Endothelial cell of umbilical vein (primary cell): ENCODE measurements at regions of chr5 and their contacts with region 1.

Region 1: DNA sequence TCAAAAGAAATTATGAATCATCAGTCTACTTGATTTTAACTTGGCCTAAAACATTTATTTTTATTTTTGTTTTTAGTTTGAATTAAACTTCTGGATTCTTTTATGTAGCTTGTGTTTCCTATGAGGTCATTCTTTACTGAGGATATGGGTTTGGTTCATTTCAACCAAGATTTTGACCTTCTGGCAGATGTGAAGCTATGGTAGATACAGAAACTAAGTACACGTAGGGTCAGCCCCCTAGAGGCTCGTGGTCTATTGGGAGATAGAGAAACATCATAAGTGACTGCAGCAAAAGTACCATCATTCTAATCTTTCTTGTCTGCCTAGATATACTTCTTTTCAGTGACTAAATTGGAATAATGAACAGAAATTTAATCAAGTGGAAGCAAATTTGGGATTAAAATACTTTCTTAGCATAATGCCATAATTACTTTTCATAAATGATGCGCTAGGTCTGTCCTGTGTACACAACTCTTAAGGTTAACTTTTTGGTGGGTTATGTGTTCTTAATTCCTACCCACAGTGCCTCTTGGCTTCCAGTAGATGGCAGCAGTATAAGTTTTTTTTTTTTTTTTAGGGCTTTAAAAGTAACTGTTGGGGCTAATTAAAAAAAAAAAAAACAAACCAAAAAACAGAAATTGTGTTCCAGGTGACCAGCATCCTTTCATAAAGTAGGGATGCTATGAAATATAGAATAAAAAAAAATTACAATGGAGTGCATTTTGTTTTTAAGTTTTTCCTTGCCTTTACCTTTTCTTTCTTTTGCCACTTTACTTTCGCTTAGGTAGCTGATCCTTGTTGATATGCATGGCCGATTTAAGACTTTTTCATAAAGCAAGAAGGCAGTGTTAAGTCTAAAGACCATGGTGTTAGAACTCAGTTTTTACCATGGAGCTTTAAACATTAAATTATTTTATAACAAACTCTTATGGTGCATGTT is 49.9 kb downstream of the LRRTM2 start:
- DNase-seq: peak; percentile 58
- H3K4me3 ChIP-seq: no peak overlapping the region
- H3K27ac ChIP-seq: peak overlapping the region; percentile 45
- H3K4me1 ChIP-seq: peaks cover 2% of the 10 kb centered on the region
- H3K27me3 ChIP-seq: no peaks in the 10 kb centered on the region
- CTCF ChIP-seq: peak; percentile 29 to 30
- POLR2A ChIP-seq: no peak

Region 2: GRCh38 chr5:138844812-138845513 is 19.8 kb after region 1 on chr5:
- CTCF ChIA-PET with region 1: interaction called, 12 read pairs
- POLR2A ChIA-PET with region 1: no interaction called
- dilution Hi-C with region 1: no loop called
- intact Hi-C with region 1: no loop called
- DNase-seq: peak; percentile 74
- H3K4me3 ChIP-seq: no peak overlapping the region
- H3K27ac ChIP-seq: peak overlapping the region; percentile 62
- H3K4me1 ChIP-seq: peaks cover 33% of the 10 kb centered on the region
- H3K27me3 ChIP-seq: no peaks in the 10 kb centered on the region
- CTCF ChIP-seq: no peak
- POLR2A ChIP-seq: no peak

Region 3: GRCh38 chr5:138872841-138873465 is 47.8 kb after region 1 on chr5:
- CTCF ChIA-PET with region 1: interaction called, 9 read pairs
- POLR2A ChIA-PET with region 1: no interaction called
- dilution Hi-C with region 1: no loop called
- intact Hi-C with region 1: loop called (anchors 1 kb)
- DNase-seq: peak; percentile 43
- H3K4me3 ChIP-seq: no peak overlapping the region
- H3K27ac ChIP-seq: no peak overlapping the region
- H3K4me1 ChIP-seq: peaks cover 19% of the 10 kb centered on the region
- H3K27me3 ChIP-seq: no peaks in the 10 kb centered on the region
- CTCF ChIP-seq: no peak
- POLR2A ChIP-seq: no peak

Region 4: DNA sequence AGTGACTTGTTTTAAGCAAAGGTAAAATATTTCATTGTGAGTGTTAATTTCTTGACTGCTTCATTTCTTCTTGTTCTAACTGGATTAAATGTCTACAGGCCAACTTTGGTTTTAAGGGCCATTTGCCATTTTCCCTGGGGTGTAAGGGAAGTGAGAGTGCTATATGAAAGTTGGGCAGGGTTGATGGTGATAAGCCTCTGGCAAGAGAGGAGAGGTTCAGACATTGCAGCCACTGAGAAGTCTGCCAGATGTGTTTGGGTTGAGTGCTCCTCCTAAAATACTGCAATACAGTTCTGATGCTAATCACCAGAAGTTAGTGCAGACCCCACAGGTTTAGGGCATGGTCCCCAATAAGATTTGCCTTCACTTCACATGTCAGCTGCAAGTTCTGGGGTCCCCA is 64.8 kb after region 1 on chr5:
- CTCF ChIA-PET with region 1: no interaction called
- POLR2A ChIA-PET with region 1: no interaction called
- dilution Hi-C with region 1: no loop called
- intact Hi-C with region 1: no loop called
- DNase-seq: no peak
- H3K4me3 ChIP-seq: no peak overlapping the region
- H3K27ac ChIP-seq: no peak overlapping the region
- H3K4me1 ChIP-seq: no peaks in the 10 kb centered on the region
- H3K27me3 ChIP-seq: no peaks in the 10 kb centered on the region
- CTCF ChIP-seq: no peak
- POLR2A ChIP-seq: no peak

Region 5: GRCh38 chr5:138900281-138900965 is 75.2 kb after region 1 on chr5:
- CTCF ChIA-PET with region 1: interaction called, 4 read pairs
- POLR2A ChIA-PET with region 1: no interaction called
- dilution Hi-C with region 1: no loop called
- intact Hi-C with region 1: loop called (anchors 1 kb)
- DNase-seq: peak; percentile 89
- H3K4me3 ChIP-seq: peak overlapping the region in 1 of 3 experiments; percentile 14
- H3K27ac ChIP-seq: peak overlapping the region; percentile 79
- H3K4me1 ChIP-seq: peaks cover 50% of the 10 kb centered on the region
- H3K27me3 ChIP-seq: no peaks in the 10 kb centered on the region
- CTCF ChIP-seq: no peak
- POLR2A ChIP-seq: no peak

Region 6: GRCh38 chr5:138911441-138911840 is 86.2 kb after region 1 on chr5:
- CTCF ChIA-PET with region 1: interaction called, 16 read pairs
- POLR2A ChIA-PET with region 1: no interaction called
- dilution Hi-C with region 1: no loop called
- intact Hi-C with region 1: no loop called
- DNase-seq: no peak
- H3K4me3 ChIP-seq: no peak overlapping the region
- H3K27ac ChIP-seq: no peak overlapping the region
- H3K4me1 ChIP-seq: no peaks in the 10 kb centered on the region
- H3K27me3 ChIP-seq: no peaks in the 10 kb centered on the region
- CTCF ChIP-seq: no peak
- POLR2A ChIP-seq: no peak

Region 7: GRCh38 chr5:139004374-139005307 is 179.4 kb after region 1 on chr5:
- CTCF ChIA-PET with region 1: no interaction called
- POLR2A ChIA-PET with region 1: no interaction called
- dilution Hi-C with region 1: no loop called
- intact Hi-C with region 1: no loop called
- DNase-seq: no peak
- H3K4me3 ChIP-seq: no peak overlapping the region
- H3K27ac ChIP-seq: no peak overlapping the region
- H3K4me1 ChIP-seq: no peaks in the 10 kb centered on the region
- H3K27me3 ChIP-seq: no peaks in the 10 kb centered on the region
- CTCF ChIP-seq: no peak
- POLR2A ChIP-seq: no peak

Region 8: DNA sequence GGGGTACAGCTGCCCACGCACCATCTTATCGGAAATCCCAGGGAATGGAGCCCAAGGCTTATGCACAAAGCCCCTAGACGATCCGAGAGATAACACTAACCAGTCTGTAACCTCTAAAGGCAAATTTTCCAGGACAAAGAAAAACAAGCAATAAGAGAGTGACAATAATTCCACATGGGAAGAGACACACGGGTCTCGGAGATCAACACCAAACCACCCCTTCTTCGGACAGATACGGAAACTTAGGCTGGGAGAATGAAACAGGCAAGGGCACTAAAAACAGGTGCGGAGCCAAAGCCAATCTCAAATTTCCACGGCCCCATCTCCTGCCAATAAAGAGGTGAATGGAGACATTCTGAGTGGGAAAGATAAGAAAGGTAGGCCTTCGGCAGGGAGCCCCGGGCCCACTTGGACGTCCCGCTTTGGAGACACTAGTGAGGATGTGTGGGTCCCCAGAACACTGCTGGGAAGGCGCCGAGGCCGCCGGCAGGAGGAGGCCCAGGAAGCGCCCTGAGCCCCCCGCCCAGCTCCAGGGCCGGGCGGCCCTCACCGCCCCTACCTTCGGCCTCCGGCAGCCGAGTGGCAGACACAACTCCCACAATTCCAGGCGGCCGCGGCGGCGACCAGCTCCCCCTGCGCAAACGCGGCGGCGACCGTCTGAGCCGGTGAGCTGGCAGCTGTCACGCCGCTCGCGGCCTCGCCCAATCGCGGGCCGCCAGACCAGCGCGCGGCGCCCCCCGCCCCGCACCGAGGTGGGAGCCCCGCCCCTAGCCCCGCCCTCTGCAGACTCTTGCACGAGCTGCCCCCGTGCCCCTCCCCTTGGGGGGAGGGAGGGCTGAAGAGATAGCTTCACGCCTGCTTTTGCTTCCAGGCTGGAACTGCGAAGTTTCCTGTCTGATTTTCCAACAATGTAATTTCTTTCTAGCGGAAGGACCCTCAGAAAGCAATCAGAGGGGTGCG is 372.8 kb after region 1 on chr5 and contains the start of gene SIL1:
- CTCF ChIA-PET with region 1: no interaction called
- POLR2A ChIA-PET with region 1: no interaction called
- dilution Hi-C with region 1: no loop called
- intact Hi-C with region 1: no loop called
- DNase-seq: peak; percentile 98
- H3K4me3 ChIP-seq: peak within 1 kb of the TSS; percentile 63 to 98 (median 95)
- H3K27ac ChIP-seq: peak within 1 kb of the TSS; percentile 98
- H3K4me1 ChIP-seq: peaks cover 10% of the 10 kb centered on the region
- H3K27me3 ChIP-seq: no peaks in the 10 kb centered on the region
- CTCF ChIP-seq: no peak
- POLR2A ChIP-seq: peak; percentile 98
- total RNA-seq, gene SIL1: 35.4 and 47.6 TPM in 2 replicates

Region 9: GRCh38 chr5:139262742-139263445 is 437.7 kb after region 1 on chr5:
- CTCF ChIA-PET with region 1: interaction called, 27 read pairs
- POLR2A ChIA-PET with region 1: no interaction called
- dilution Hi-C with region 1: no loop called
- intact Hi-C with region 1: loop called (anchors 1 kb)
- DNase-seq: peak; percentile 87
- H3K4me3 ChIP-seq: no peak overlapping the region
- H3K27ac ChIP-seq: no peak overlapping the region
- H3K4me1 ChIP-seq: no peaks in the 10 kb centered on the region
- H3K27me3 ChIP-seq: peaks cover 2 to 10% of the 10 kb centered on the region in 2 experiments
- CTCF ChIP-seq: peak; percentile 87 to 88
- POLR2A ChIP-seq: no peak